WTC11 (cell line): ENCODE measurements at regions of chr7 and their contacts with region 1.

Region 1: GRCh38 chr7:129091484-129092002 is 36.6 kb upstream of the TNPO3 start:
- DNase-seq: peak; percentile 98
- ATAC-seq: peak; percentile 98
- H3K4me3 Mint-ChIP-seq: no peak overlapping the region
- H3K27ac Mint-ChIP-seq: no peak overlapping the region
- H3K4me1 Mint-ChIP-seq: peaks cover 8% of the 10 kb centered on the region
- H3K27me3 Mint-ChIP-seq: no peaks in the 10 kb centered on the region
- CTCF ChIP-seq: peak; percentile 93

Region 2: DNA sequence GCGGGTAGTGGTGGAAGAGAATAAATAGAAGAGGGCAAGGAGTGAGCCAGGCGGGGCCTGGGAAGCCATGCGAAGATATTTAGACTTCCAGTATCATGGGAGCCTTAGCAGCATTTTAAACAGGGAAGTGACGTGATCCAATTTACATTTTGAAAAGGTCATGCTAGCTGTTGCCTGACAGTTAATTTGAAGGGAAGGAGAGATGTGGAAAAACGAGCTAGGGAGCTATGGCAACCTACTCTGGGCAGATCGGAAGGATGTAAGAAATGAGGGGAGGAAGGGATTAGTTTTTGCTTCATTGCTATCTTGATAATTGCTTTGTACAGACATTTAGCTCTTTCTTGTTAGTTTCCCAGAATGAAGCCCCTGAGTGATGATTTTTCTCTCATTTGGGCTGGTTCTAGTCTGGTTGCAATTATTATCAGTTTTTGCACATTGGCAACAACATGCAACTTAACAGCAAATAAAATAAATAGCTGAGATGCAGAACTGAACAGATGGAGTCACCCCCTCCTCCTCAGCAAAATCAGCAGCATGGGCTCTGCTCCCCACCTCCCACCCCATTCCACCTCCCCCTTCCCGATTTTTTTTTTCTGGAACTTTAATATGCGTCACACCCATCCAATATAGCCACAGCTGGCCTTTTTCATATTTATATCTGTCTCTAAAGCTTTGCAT is 365.3 kb before region 1 on chr7:
- CTCF ChIA-PET with region 1: no interaction called
- POLR2A ChIA-PET with region 1: no interaction called
- DNase-seq: no peak
- ATAC-seq: no peak
- H3K4me3 Mint-ChIP-seq: no peak overlapping the region
- H3K27ac Mint-ChIP-seq: no peak overlapping the region
- H3K4me1 Mint-ChIP-seq: no peaks in the 10 kb centered on the region
- H3K27me3 Mint-ChIP-seq: peaks cover 10% of the 10 kb centered on the region
- CTCF ChIP-seq: no peak

Region 3: DNA sequence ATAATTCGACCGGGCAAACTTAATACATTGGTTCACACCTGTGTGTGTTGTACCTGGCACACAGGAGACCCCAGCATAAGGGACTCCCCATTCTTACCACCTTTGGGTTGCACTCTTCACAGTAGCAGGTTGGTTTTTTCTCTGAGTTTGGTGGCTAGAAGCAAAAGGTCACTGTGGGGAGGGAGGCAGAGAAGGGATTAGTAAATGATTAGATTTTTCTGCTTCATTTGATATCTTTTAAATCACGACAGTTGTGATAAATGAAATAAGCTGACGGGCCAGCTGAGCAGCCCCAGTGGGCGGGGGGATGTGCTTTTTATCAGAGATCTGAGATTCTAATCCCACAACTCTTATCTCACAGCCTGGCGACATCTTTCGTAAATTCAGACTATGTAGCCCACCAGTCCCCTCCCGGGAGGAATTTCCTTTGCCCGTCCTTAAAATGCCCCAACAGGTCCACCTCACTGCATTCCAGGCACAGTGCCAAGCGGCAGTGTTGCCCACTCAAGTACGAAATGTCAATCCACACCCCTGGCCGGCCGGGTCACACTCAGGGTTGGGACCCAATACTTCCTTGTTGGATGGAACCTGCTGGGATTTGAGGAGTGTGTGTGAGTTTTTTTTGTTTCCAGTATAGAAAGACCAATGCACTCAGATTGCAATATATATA is 170.5 kb before region 1 on chr7:
- CTCF ChIA-PET with region 1: interaction called, 16 read pairs
- POLR2A ChIA-PET with region 1: no interaction called
- DNase-seq: no peak
- ATAC-seq: no peak
- H3K4me3 Mint-ChIP-seq: no peak overlapping the region
- H3K27ac Mint-ChIP-seq: no peak overlapping the region
- H3K4me1 Mint-ChIP-seq: peaks cover 12% of the 10 kb centered on the region
- H3K27me3 Mint-ChIP-seq: peaks cover 41% of the 10 kb centered on the region
- CTCF ChIP-seq: no peak

Region 4: DNA sequence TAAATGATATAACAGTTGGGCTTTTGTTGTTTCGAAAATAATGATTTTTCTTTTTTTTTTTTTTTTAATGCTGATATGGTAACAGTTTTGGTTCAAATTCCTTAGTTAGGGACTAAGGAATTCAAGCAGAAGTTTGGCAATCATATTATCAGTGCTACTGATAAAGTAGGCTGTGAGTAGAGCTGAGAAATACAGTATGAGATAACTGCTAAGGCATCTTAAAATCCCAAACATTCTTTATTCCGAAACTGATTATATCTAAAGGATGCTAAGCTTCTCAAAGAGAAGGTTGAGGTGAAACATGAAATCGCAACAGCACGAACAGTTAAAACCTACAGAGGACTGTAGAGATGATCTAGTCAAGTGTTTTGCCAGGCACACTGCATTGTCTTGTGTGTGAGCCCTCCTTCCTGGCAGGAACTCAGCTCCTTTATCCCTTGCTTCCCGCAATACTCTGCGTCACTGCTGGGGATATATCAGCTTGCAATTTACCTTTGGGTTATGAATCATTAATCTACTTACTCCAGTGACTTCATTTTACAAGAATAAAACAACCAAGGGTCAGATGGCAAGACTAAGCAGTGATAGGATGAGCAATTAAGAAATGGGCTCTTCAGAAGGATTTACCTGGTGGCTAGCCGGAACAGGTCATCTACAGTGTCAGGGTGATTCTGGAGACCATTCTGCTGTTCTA is 117.2 kb before region 1 on chr7:
- CTCF ChIA-PET with region 1: interaction called, 15 read pairs
- POLR2A ChIA-PET with region 1: no interaction called
- DNase-seq: no peak
- ATAC-seq: no peak
- H3K4me3 Mint-ChIP-seq: no peak overlapping the region
- H3K27ac Mint-ChIP-seq: no peak overlapping the region
- H3K4me1 Mint-ChIP-seq: no peaks in the 10 kb centered on the region
- H3K27me3 Mint-ChIP-seq: no peaks in the 10 kb centered on the region
- CTCF ChIP-seq: no peak

Region 5: GRCh38 chr7:129024125-129024524 is 67.4 kb before region 1 on chr7:
- CTCF ChIA-PET with region 1: interaction called, 15 read pairs
- POLR2A ChIA-PET with region 1: no interaction called
- DNase-seq: no peak
- ATAC-seq: peak; percentile 47; the same call in 1 of the 2 replicates
- H3K4me3 Mint-ChIP-seq: no peak overlapping the region
- H3K27ac Mint-ChIP-seq: peak overlapping the region; percentile 72
- H3K4me1 Mint-ChIP-seq: peaks cover 18% of the 10 kb centered on the region
- H3K27me3 Mint-ChIP-seq: no peaks in the 10 kb centered on the region
- CTCF ChIP-seq: no peak

Region 6: DNA sequence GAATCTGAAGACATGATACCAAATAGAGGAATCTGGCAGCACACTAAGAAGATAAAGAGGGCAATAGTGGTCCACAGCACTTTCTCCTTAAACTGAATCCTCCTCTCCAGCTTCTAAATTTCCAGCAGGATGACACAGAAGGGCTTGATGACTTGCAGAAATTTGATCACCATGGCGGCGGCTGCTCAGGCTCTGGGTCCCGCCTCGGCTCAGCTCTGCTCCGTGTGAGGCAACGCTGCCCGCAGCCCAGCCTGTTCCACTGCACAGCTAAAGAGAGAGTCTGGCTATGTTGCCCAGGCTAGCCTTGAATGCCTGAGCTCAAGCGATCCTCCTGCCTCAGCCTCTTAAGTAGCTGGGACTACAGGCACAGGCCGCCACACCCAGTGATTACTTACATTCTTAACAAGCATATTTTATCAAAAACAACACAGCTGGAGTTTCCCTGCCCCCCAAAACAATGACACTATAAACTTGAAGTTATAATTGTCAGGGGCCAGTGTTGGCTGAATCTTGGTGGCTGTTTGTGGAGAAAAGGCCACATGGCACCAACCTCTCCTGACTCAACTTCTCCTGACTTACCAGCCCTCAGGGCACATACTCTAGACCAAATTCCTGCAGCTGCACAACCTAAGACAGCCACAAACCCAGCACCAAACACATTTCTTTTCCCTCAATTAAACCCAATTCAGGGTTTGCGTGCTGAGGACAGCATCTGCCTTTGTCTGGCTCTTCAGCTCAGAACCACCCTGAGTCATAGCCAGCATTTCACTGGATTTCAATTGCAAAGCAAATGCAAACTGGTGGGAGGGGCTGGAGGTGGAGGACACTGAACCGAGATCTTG is 25.0 kb before region 1 on chr7:
- CTCF ChIA-PET with region 1: interaction called, 30 read pairs
- POLR2A ChIA-PET with region 1: no interaction called
- DNase-seq: peak; percentile 38
- ATAC-seq: peak; percentile 95
- H3K4me3 Mint-ChIP-seq: peak overlapping the region; percentile 37
- H3K27ac Mint-ChIP-seq: peak overlapping the region; percentile 95
- H3K4me1 Mint-ChIP-seq: peaks cover 23% of the 10 kb centered on the region
- H3K27me3 Mint-ChIP-seq: peaks cover 5% of the 10 kb centered on the region
- CTCF ChIP-seq: no peak

Region 7: GRCh38 chr7:129144095-129144833 is 52.7 kb after region 1 on chr7 and contains the start of gene TSPAN33:
- CTCF ChIA-PET with region 1: interaction called, 12 read pairs
- POLR2A ChIA-PET with region 1: no interaction called
- DNase-seq: peak; percentile 88
- ATAC-seq: peak; percentile 98
- H3K4me3 Mint-ChIP-seq: peak within 1 kb of the TSS; percentile 78
- H3K27ac Mint-ChIP-seq: no peak within 1 kb of the TSS; the same call in 1 of the 2 replicates
- H3K4me1 Mint-ChIP-seq: peaks cover 14% of the 10 kb centered on the region
- H3K27me3 Mint-ChIP-seq: peaks cover 38% of the 10 kb centered on the region
- CTCF ChIP-seq: no peak
- total RNA-seq, gene TSPAN33: 30.0 to 42.9 TPM (median 39.8 TPM) in 3 replicates

Region 8: GRCh38 chr7:129767120-129768015 is 675.8 kb after region 1 on chr7:
- CTCF ChIA-PET with region 1: no interaction called
- POLR2A ChIA-PET with region 1: no interaction called
- DNase-seq: no peak
- ATAC-seq: no peak
- H3K4me3 Mint-ChIP-seq: no peak overlapping the region
- H3K27ac Mint-ChIP-seq: no peak overlapping the region
- H3K4me1 Mint-ChIP-seq: peaks cover 34% of the 10 kb centered on the region
- H3K27me3 Mint-ChIP-seq: no peaks in the 10 kb centered on the region
- CTCF ChIP-seq: no peak